WTC11 (cell line): ENCODE measurements at regions of chr10 and their contacts with region 1.

Region 1: DNA sequence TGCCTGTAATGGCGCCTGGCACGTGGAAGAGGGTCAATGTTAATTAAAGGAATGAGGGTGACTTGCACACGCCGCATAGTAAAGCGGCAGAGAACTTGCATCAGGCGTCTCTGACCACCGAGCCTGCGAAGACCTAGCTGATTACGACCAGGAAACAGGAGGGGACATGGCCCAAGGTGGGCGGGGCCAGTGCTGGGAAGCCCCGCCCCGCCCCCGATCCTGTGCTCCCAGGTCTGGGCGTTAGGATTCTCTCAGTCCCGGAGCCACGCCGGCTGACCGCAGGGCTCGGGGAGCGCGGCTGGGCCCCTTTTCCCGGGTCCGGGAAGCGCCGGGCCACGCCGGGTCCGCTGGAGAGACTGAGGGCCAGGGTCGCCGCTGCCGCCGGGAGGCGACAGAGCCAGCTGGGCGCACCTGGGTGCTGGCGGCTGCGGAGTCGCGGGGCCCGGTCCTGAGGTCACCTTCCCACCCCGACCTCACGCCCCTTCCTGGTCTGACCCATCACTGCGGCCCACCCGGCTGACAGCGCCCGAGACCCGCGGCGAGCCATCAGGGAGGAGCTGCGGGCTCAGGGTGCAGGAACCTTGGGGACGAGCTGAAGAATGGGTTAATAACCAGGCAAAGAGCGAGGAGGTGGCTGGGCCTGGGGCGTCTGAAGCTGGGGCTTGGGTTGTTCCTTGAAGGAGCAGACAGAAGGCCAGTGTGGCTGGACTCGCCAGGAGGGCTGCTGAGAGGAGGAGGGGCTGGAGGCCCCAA is 23.0 kb upstream of the GRID1 start:
- DNase-seq: peak; percentile 93
- ATAC-seq: peak; percentile 96
- H3K4me3 Mint-ChIP-seq: peak overlapping the region; percentile 72
- H3K27ac Mint-ChIP-seq: peak overlapping the region; percentile 60; the same call in 1 of the 2 replicates
- H3K4me1 Mint-ChIP-seq: peaks cover 24% of the 10 kb centered on the region
- H3K27me3 Mint-ChIP-seq: peaks cover 52% of the 10 kb centered on the region
- CTCF ChIP-seq: no peak

Region 2: GRCh38 chr10:86366033-86366901 is 23.4 kb before region 1 on chr10 and contains the start of gene GRID1:
- CTCF ChIA-PET with region 1: interaction called, 15 read pairs
- POLR2A ChIA-PET with region 1: interaction called, 9 read pairs
- DNase-seq: peak; percentile 58
- ATAC-seq: peak; percentile 2; the same call in 1 of the 2 replicates
- H3K4me3 Mint-ChIP-seq: peak within 1 kb of the TSS; percentile 59
- H3K27ac Mint-ChIP-seq: no peak within 1 kb of the TSS
- H3K4me1 Mint-ChIP-seq: peaks cover 18% of the 10 kb centered on the region
- H3K27me3 Mint-ChIP-seq: peaks cover 91% of the 10 kb centered on the region
- CTCF ChIP-seq: no peak
- total RNA-seq, gene GRID1: 0.21 to 0.50 TPM (median 0.37 TPM) in 3 replicates